ENCODE measurements at regions of chr16 and their contacts with region 1.

Region 1: DNA sequence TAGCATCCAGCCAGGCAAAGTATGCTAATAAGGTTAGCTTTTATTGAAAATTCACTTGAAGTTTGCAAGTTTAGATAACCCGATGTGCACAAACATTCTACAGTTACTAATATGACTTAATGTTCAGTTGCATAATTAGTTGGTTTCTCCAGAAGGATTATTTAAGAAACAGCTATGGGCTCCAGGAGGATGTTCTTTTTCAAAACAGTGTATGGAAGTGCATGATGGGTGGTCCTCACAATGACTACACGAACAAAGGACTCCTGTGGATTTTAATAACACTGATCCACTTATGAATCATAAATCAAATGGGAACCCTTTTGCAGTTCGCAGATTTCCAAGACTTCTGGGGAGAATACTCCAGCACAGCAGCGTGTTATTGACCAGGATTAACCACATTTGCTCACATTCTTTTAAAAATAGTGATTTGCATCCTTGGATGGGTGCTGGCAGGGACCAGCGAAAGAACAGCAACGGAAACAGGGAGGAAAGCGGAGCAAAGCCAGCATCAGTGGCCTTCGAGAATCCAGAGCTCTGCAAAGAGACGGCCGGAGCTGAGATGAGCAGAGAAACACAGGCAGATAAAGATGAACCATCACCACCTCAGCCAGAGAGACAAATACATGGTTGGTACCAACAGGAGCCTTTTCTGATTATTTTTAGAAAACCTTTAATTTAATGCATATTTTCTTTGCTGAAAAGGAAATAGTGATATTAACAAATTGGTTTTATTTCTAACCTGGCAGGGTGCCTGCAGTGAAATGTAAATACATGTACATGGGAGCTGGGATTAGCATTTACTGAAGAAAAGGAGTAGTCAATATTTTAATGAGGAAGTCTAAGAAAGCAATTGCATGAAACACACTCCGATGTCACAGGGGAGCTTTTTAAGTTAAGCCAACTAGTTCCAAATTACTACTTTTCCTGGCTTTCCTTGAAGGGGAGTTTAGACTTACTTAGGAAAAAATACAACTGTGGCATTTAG is 623.2 kb upstream of the ZFHX3 start:
- DNase-seq: no peak
- H3K4me3 ChIP-seq: no peak overlapping the region
- H3K27ac ChIP-seq: no peak overlapping the region
- H3K4me1 ChIP-seq: no peaks in the 10 kb centered on the region
- H3K27me3 ChIP-seq: peaks cover 8% of the 10 kb centered on the region
- CTCF ChIP-seq: no peak
- EP300 ChIP-seq: no peak
- POLR2A ChIP-seq: no peak

Region 2: DNA sequence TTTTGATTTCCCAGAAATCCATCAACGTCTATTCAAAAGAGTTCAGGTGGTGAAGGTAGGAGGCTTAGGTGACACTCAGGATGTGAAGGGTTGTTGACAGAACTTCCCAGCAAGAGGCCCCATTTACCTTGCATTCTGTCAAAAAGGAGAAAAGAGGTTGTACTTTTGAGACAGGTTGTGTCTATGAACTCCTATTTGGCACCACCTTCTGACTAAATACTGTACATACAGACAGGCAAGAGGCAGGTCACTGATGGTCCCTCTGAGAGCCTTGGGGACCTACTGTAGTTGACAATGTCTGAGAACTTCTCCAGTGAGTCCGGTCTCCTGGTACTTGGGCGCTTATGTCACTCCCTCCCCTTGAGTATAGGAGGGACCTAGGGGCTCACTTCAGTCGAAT is 143.9 kb before region 1 on chr16:
- in situ Hi-C with region 1: no loop called
- intact Hi-C with region 1: no loop called
- DNase-seq: no peak
- H3K4me3 ChIP-seq: no peak overlapping the region
- H3K27ac ChIP-seq: no peak overlapping the region
- H3K4me1 ChIP-seq: peaks cover 0 to 3% (median 0%) of the 10 kb centered on the region in 4 donors
- H3K27me3 ChIP-seq: no peaks in the 10 kb centered on the region
- CTCF ChIP-seq: no peak
- EP300 ChIP-seq: no peak
- POLR2A ChIP-seq: no peak

Region 3: DNA sequence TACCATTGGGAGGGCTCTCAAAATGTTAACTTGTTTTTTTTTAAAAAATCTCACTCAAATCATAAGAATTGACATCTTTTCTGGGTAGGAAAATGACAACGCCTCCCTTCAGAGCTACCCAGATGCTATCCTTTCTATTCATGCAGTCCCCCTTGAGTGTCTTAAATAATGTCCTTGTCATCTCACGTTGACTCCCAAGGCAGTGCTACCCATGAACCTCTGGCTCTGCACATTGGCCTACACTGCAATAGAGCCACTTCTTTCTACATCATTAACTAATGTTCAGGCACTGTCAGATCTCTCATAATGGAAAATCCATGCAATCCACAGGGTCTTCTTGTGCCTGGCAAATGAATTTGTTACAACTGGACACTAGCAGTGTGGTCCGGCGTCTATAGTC is 53.4 kb before region 1 on chr16:
- in situ Hi-C with region 1: no loop called
- intact Hi-C with region 1: no loop called
- DNase-seq: no peak
- H3K4me3 ChIP-seq: no peak overlapping the region
- H3K27ac ChIP-seq: no peak overlapping the region
- H3K4me1 ChIP-seq: no peaks in the 10 kb centered on the region
- H3K27me3 ChIP-seq: peaks cover 10% of the 10 kb centered on the region
- CTCF ChIP-seq: no peak
- EP300 ChIP-seq: no peak
- POLR2A ChIP-seq: no peak

Region 4: DNA sequence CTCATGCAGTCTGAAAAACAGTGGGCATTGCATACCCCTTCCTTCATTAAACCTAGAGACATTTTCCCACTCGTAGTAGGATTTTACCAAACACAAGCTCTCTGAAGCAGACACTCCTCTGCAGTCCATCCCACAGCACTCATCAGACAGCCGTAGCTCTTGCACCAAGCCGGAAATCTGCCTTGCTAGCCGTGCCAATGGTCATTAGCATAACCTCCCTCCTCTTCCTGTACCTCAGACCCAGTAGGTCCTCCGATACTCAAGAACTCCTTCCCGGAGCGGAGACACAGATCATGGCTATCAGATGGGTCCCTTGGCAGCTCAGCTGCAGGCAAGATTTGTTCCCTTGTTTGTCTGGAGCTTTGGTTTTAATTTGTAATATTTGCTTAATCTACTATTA is 142.4 kb after region 1 on chr16:
- in situ Hi-C with region 1: no loop called
- intact Hi-C with region 1: loop called (anchors 10 kb)
- DNase-seq: no peak
- H3K4me3 ChIP-seq: no peak overlapping the region
- H3K27ac ChIP-seq: no peak overlapping the region
- H3K4me1 ChIP-seq: no peaks in the 10 kb centered on the region
- H3K27me3 ChIP-seq: no peaks in the 10 kb centered on the region
- CTCF ChIP-seq: no peak
- EP300 ChIP-seq: no peak
- POLR2A ChIP-seq: no peak